GM10248 (cell line): ENCODE measurements at regions of chr5 and their contacts with region 1.

Region 1: DNA sequence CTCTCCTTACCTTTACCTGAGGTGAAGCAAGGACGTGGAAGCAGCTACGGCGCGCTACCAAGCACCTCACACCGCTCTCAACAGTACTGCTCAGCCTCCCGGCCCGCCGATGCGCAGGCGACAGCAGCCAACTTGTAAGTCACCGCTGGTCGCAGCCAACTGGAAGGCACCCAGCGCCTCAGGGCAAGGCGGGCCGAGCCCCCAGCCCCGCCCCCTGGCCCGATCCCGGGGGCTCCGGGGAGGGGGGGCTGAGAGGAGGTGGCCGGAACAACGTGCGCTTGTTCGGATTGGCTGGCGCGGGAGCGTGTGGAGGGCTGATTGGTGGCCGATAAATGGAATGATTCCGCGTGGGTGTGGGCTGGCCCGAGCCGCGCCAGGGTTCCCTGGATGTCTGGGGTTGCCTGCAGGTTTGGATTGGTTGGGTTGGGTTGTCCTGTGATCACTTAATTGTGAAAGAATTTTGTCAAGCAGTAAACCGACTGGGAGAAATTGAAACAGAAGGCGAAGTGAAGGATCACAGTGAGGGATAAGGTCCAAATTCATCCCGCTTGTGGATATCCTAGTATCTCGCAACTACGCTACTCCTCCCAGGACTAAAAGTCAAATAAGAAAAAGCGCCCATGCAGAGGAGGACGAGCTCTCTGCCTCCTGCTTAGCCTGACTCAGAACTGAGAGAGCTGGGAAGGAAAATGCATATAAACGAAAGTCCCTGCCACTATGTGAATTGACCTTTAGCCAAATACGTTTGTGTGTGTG is at the start of gene STARD4:
- DNase-seq: peak; percentile 97
- CTCF ChIP-seq: no peak

Region 2: GRCh38 chr5:111494364-111494999 is 18.1 kb before region 1 on chr5:
- CTCF ChIA-PET with region 1: interaction called, 10 read pairs
- POLR2A ChIA-PET with region 1: interaction called, 20 read pairs
- DNase-seq: no peak
- CTCF ChIP-seq: no peak